Ovary (tissue), 10 donors: ENCODE measurements at regions of chr20 and their contacts with region 1.

Region 1: DNA sequence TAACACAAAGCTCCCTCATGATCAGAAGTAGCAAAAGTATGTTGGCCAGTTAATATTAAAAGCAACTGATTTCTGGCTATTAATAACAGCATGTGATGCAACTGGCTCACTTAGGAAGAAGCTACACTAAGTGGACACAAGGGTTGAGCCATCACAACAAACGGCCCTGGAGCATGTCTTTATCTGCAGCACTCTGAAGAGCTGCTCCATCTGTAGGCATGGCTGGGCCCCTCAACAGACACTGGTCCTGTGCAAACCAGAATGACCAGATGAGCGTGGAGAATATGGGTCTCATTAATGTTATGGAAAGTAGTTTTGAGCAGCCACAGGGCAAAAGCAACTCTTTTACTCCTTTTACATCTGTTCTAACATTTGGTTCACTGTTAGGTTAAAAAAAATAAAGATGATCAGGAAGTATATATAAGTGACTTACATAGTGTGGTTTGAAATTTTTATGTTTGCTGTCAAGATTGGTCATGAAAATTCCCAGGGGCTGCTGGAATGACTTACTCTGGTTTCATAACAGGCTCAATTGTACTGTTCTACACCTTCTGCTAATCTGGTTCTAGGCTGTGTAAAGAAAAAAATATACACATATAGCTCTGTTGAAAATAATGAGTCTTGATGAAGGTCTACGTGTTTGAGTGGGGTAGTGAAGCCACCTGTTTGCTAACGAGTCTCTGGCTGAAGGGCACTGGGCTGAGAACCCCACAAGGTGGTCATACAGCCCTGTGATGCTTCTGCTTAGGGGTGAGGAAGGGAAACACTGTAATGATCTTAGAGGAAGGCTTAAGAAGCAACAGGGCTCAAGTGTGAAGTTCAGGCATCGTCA is 58.1 kb downstream of the INSM1 start:
- DNase-seq: no peak
- H3K4me3 ChIP-seq: no peak overlapping the region
- H3K27ac ChIP-seq: no peak overlapping the region
- H3K4me1 ChIP-seq: no peaks in the 10 kb centered on the region
- H3K27me3 ChIP-seq: no peaks in the 10 kb centered on the region
- CTCF ChIP-seq: no peak
- EP300 ChIP-seq: no peak
- POLR2A ChIP-seq: no peak

Region 2: GRCh38 chr20:20489054-20489453 is 63.0 kb after region 1 on chr20:
- intact Hi-C with region 1: loop called in 1 of 4 experiments (anchors 10 kb)
- DNase-seq: no peak
- H3K4me3 ChIP-seq: no peak overlapping the region
- H3K27ac ChIP-seq: no peak overlapping the region
- H3K4me1 ChIP-seq: no peaks in the 10 kb centered on the region
- H3K27me3 ChIP-seq: no peaks in the 10 kb centered on the region
- CTCF ChIP-seq: no peak
- EP300 ChIP-seq: no peak
- POLR2A ChIP-seq: no peak

Region 3: DNA sequence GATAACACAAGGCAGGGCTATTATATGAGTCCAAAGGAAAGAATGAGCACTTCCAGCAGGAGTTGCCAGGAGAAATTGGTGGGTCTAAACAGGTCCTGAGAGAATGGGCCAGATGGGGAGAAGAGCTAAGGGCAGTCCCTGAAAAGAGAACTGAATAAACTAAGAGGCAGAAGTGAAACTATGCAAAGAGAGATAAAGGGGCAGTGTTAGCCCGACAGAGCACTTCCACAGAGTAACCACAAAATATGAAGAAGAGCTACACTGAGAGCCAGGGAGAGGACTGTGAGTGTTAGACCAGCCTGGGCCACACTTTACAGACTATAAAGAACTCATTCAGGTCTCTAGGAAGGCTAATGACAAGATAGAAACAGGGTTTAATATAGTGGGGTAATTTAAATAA is 242.6 kb after region 1 on chr20:
- intact Hi-C with region 1: no loop called
- DNase-seq: no peak
- H3K4me3 ChIP-seq: no peak overlapping the region
- H3K27ac ChIP-seq: no peak overlapping the region
- H3K4me1 ChIP-seq: peaks cover 7% of the 10 kb centered on the region
- H3K27me3 ChIP-seq: no peaks in the 10 kb centered on the region
- CTCF ChIP-seq: no peak
- EP300 ChIP-seq: no peak
- POLR2A ChIP-seq: no peak